Cardiac septum (tissue), 1 donor: ENCODE measurements at regions of chr5 and their contacts with region 1.

Region 1: DNA sequence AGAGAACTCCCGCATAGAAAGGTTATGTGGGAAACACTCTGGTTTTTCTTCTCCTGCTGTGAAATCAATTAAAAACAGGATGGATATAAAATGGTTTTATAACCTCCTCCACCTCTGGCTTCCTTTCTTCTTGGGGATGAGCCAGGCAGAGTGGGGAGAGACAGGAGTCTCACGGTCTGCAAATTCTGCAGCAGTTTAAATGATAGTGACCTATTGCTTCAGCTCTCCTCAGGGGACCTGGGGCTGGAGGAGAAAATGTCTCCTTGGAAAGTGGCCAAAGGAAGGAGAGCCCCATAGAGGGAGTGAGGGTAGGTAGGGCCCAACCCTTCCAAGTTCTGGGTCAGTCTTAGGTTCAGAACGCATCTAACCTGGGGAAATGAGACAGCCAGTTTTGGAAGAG is 118.8 kb downstream of the MTX3 start:
- DNase-seq: no peak

Region 2: GRCh38 chr5:79932510-79933504 is 60.5 kb after region 1 on chr5:
- intact Hi-C with region 1: loop called (anchors 5 kb)
- DNase-seq: no peak

Region 3: DNA sequence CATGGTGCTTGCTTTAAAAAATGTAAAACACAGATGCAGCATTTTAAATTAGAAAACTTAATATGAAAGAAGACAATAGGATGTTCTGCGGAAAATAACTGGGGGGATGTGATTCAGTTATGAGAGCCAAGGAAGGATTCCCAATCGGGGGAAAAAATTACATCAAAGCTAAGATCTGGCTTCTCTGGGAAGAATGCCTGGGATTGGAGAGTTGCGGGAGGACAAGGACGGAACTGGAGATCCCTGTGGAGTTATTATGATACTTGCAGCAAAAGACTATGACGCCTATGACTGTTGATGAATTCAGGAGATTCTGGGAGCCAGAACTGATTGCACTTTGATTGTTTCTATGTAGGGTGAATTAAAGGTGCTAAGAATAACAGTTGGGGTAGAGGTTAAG is 94.2 kb after region 1 on chr5:
- intact Hi-C with region 1: loop called (anchors 5 kb)
- DNase-seq: no peak

Region 4: GRCh38 chr5:80083101-80083890 is 211.0 kb after region 1 on chr5:
- intact Hi-C with region 1: loop called (anchors 5 kb)
- DNase-seq: peak; percentile 63